Activated naive CD4-positive, alpha-beta T cell treated with anti-CD3 and anti-CD28 coated beads for 36 hours (primary cell): ENCODE measurements at regions of chr2 and their contacts with region 1.

Region 1: DNA sequence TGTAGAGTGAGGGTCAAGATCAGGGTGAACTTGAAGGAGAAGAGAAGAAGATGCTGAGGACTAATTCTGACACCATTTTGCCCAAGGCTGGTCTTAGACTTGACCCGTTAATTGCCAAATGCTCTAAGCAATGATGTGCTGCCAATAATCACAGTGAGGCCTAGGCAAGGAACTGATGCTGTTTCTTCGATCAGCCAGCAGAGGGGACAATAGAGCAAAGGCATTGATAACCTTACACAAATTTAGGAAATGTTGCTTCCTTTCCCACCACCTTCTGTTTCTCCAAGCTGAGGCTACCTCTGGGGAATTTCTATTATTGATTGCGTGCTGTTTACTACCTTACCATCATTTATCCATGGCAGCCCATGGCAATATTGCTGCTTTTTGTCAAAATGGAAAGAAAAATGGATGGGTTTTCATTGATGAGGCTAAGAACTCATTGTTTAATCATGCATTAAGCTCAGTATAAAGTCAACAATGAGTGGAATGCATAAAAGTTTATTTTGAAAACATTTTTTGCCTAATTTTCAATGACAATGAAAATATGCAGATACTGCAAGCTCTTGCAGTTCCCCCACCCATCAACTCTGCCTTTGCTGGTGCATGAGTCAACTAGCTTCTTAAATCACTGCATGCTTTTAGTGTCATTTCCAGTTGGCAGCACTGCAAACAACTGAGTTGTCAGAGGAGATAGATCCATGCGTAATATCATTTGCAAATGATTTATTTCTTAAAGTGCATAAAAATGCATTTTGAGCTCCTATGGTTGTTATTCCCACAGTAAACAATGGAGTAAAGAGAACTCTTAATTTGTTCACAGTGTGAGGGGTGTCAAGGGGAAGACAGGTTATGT is 116.4 kb upstream of the NYAP2 start:
- DNase-seq: peak; percentile 31
- H3K4me3 Mint-ChIP-seq: no peak overlapping the region
- H3K27ac Mint-ChIP-seq: no peak overlapping the region
- H3K4me1 Mint-ChIP-seq: peaks cover 3% of the 10 kb centered on the region
- H3K27me3 Mint-ChIP-seq: no peaks in the 10 kb centered on the region

Region 2: GRCh38 chr2:225122583-225123486 is 160.2 kb before region 1 on chr2:
- CTCF ChIA-PET with region 1: interaction called, 7 read pairs
- intact Hi-C with region 1: loop called (anchors 2 kb)
- DNase-seq: peak; percentile 60
- H3K4me3 Mint-ChIP-seq: no peak overlapping the region
- H3K27ac Mint-ChIP-seq: no peak overlapping the region
- H3K4me1 Mint-ChIP-seq: no peaks in the 10 kb centered on the region
- H3K27me3 Mint-ChIP-seq: no peaks in the 10 kb centered on the region

Region 3: DNA sequence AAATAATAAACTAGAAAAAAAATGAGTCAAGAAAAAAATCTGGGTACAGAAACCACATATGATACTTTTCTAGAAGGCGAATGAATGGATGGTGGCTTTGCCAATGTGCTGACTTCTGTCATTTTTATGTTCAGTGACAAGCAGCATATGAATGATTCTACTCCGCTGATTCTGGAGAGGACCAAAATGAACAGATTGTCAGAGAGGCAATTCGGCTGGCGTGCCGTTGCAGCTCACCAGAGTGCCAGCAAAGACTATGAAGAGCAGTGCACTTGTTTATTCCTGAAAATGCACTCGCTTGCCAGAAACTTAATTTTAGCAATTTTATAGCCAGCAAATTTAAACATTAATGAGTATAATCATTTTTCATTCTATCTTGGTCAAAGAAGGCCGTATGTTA is 10.6 kb after region 1 on chr2:
- CTCF ChIA-PET with region 1: interaction called, 10 read pairs
- intact Hi-C with region 1: no loop called
- DNase-seq: no peak
- H3K4me3 Mint-ChIP-seq: no peak overlapping the region
- H3K27ac Mint-ChIP-seq: no peak overlapping the region
- H3K4me1 Mint-ChIP-seq: no peaks in the 10 kb centered on the region
- H3K27me3 Mint-ChIP-seq: peaks cover under 1% of the 10 kb centered on the region

Region 4: GRCh38 chr2:225556461-225556860 is 273.4 kb after region 1 on chr2:
- CTCF ChIA-PET with region 1: no interaction called
- intact Hi-C with region 1: loop called (anchors 5 kb)
- DNase-seq: no peak
- H3K4me3 Mint-ChIP-seq: no peak overlapping the region
- H3K27ac Mint-ChIP-seq: no peak overlapping the region
- H3K4me1 Mint-ChIP-seq: no peaks in the 10 kb centered on the region
- H3K27me3 Mint-ChIP-seq: peaks cover 14% of the 10 kb centered on the region